Naive thymus-derived CD4-positive, alpha-beta T cell (primary cell): ENCODE measurements at regions of chr19 and their contacts with region 1.

Region 1: DNA sequence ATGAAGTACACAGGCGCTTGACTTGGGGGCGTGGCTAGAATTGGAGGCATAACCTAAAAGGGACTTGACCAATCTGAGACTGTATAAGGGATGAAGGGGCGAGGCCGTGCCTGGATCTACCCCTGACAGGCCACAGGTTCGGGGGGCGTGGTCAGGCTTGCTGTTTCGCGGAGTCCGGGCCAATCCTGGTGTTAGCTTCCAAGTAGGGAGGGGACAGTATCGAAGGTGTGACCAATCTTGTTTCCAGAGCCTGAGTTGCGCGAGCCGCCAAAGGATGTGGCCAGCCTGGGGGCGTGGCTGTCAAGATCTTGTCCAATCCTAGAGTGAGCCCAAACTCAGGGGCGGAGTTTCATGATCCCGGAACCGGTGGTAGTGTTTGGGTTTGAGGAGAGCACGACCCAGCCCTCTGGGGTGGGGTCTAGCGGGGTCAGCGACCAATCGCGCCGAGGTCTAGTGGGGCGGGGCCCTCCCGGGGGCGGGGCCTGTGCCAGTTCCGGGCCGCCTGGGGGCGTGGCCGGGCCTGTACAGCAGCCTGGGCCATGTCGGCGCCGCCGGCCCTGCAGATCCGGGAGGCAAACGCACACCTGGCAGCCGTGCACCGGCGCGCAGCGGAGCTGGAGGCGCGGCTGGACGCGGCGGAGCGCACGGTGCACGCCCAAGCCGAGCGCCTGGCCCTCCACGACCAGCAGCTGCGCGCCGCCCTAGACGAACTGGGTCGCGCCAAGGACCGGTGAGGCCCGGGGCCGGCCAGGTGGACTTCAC is at the start of gene VMAC:
- DNase-seq: peak in 8 of 9 donors; percentile 99 to 100 (median 100)
- ATAC-seq: peak; percentile 85
- H3K4me3 ChIP-seq: peak within 1 kb of the TSS; percentile 89
- H3K4me3 Mint-ChIP-seq: peak within 1 kb of the TSS; percentile 89 to 99 (median 96)
- H3K27ac ChIP-seq: peak within 1 kb of the TSS; percentile 93
- H3K27ac Mint-ChIP-seq: peak within 1 kb of the TSS; percentile 96 to 100 (median 100)
- H3K4me1 ChIP-seq: peaks cover 18 to 19% of the 10 kb centered on the region in 2 donors
- H3K4me1 Mint-ChIP-seq: peaks cover 21 to 53% (median 30%) of the 10 kb centered on the region in 7 donors
- H3K27me3 ChIP-seq: no peaks in the 10 kb centered on the region
- H3K27me3 Mint-ChIP-seq: no peaks in the 10 kb centered on the region
- total RNA-seq, gene VMAC: 13.1 to 39.4 (median 27.8) TPM

Region 2: GRCh38 chr19:4723367-4724187 is 1181.0 kb before region 1 on chr19 and contains the start of gene DPP9:
- CTCF ChIA-PET with region 1: no interaction called
- POLR2A ChIA-PET with region 1: no interaction called
- intact Hi-C with region 1: loop called in 1 of 2 experiments (anchors 1 kb)
- DNase-seq: peak; percentile 84 to 100 (median 99)
- ATAC-seq: peak; percentile 99
- H3K4me3 ChIP-seq: peak within 1 kb of the TSS; percentile 96
- H3K4me3 Mint-ChIP-seq: peak within 1 kb of the TSS; percentile 83 to 99 (median 95)
- H3K27ac ChIP-seq: peak within 1 kb of the TSS; percentile 87
- H3K27ac Mint-ChIP-seq: peak within 1 kb of the TSS; percentile 93 to 100 (median 98)
- H3K4me1 ChIP-seq: peaks cover 19 to 26% of the 10 kb centered on the region in 2 donors
- H3K4me1 Mint-ChIP-seq: peaks cover 21 to 48% (median 37%) of the 10 kb centered on the region in 7 donors
- H3K27me3 ChIP-seq: no peaks in the 10 kb centered on the region
- H3K27me3 Mint-ChIP-seq: peaks cover 0 to 10% (median 5%) of the 10 kb centered on the region in 5 donors
- total RNA-seq, gene DPP9: 71.2 to 90.7 (median 81.4) TPM

Region 3: DNA sequence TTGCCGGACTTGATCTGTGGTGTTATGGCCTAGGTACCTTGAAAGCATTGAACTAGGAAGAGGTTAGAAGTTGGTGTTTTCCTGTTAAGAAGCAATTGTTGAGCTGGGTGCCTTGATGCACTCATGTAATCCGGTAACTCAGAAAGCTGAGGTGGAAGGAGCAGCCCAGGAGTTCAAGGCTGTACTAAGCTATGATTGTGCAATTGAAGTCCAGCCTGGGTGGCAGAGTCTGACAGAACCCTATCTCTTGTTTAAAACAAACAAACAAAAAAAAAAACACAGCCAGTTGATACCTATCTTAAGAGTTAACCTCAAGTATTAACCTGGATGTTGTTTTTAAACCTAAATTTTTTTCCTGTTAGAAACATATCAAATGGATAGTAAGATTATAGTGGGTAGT is 262.3 kb before region 1 on chr19:
- CTCF ChIA-PET with region 1: no interaction called
- POLR2A ChIA-PET with region 1: no interaction called
- intact Hi-C with region 1: no loop called
- DNase-seq: no peak
- ATAC-seq: no peak
- H3K4me3 ChIP-seq: no peak overlapping the region
- H3K4me3 Mint-ChIP-seq: no peak overlapping the region
- H3K27ac ChIP-seq: no peak overlapping the region
- H3K27ac Mint-ChIP-seq: peak overlapping the region in 2 of 9 donors; percentile 38 to 60
- H3K4me1 ChIP-seq: no peaks in the 10 kb centered on the region
- H3K4me1 Mint-ChIP-seq: peaks cover 16 to 57% (median 47%) of the 10 kb centered on the region in 7 donors
- H3K27me3 ChIP-seq: no peaks in the 10 kb centered on the region
- H3K27me3 Mint-ChIP-seq: no peaks in the 10 kb centered on the region

Region 4: GRCh38 chr19:5690125-5690954 is 214.2 kb before region 1 on chr19 and contains the start of gene RPL36:
- CTCF ChIA-PET with region 1: no interaction called
- POLR2A ChIA-PET with region 1: interaction called, 4 read pairs
- intact Hi-C with region 1: loop called in 1 of 2 experiments (anchors 1 kb)
- DNase-seq: peak; percentile 95 to 100 (median 99)
- ATAC-seq: peak; percentile 77
- H3K4me3 ChIP-seq: peak within 1 kb of the TSS; percentile 90
- H3K4me3 Mint-ChIP-seq: peak within 1 kb of the TSS; percentile 90 to 98 (median 94)
- H3K27ac ChIP-seq: peak within 1 kb of the TSS; percentile 85
- H3K27ac Mint-ChIP-seq: peak within 1 kb of the TSS; percentile 89 to 97 (median 93)
- H3K4me1 ChIP-seq: peaks cover 12 to 21% of the 10 kb centered on the region in 2 donors
- H3K4me1 Mint-ChIP-seq: peaks cover 5 to 39% (median 33%) of the 10 kb centered on the region in 7 donors
- H3K27me3 ChIP-seq: no peaks in the 10 kb centered on the region
- H3K27me3 Mint-ChIP-seq: no peaks in the 10 kb centered on the region
- total RNA-seq, gene RPL36: 865 to 1,786 (median 1,037) TPM

Region 5: DNA sequence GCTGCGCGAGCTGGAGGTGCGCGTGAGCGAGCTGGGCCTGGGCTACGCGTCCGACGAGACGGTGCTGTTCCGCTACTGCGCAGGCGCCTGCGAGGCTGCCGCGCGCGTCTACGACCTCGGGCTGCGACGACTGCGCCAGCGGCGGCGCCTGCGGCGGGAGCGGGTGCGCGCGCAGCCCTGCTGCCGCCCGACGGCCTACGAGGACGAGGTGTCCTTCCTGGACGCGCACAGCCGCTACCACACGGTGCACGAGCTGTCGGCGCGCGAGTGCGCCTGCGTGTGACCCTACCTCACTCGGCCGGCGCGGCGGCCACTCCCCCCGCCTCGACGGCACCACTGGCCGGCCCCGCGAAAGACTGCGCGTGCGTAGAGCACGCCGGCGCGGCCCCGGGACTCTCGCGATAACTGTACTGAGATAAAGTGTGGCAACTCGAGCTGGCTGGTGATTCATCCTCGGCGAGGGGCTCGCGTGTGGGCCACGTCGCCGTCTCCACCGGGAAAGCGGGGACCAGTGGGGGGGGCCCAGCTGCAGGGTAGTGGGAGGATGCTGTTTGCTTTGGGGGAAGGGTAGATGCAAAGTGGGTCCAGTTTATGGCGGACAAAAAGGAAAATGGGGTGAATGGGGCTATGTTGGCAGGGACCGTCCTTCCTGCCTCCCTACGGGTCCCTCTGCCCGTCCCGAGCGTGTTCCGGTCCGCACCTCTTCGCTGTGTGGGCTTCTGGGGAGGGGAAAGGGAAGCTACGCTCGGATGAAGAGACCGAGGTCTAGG is 76.5 kb before region 1 on chr19:
- CTCF ChIA-PET with region 1: interaction called, 3 read pairs
- POLR2A ChIA-PET with region 1: interaction called, 43 read pairs
- intact Hi-C with region 1: loop called (anchors 1 kb)
- DNase-seq: peak; percentile 91 to 98 (median 94)
- ATAC-seq: peak; percentile 90
- H3K4me3 ChIP-seq: peak overlapping the region; percentile 76
- H3K4me3 Mint-ChIP-seq: peak overlapping the region; percentile 91 to 100 (median 97)
- H3K27ac ChIP-seq: peak overlapping the region; percentile 80
- H3K27ac Mint-ChIP-seq: peak overlapping the region; percentile 94 to 100 (median 97)
- H3K4me1 ChIP-seq: peaks cover 10 to 17% of the 10 kb centered on the region in 2 donors
- H3K4me1 Mint-ChIP-seq: peaks cover 5 to 19% (median 10%) of the 10 kb centered on the region in 7 donors
- H3K27me3 ChIP-seq: no peaks in the 10 kb centered on the region
- H3K27me3 Mint-ChIP-seq: peaks cover 0 to 6% (median 0%) of the 10 kb centered on the region in 5 donors

Region 6: GRCh38 chr19:5839065-5840017 is 65.2 kb before region 1 on chr19 and contains the start of gene FUT6:
- CTCF ChIA-PET with region 1: no interaction called
- POLR2A ChIA-PET with region 1: no interaction called
- intact Hi-C with region 1: no loop called
- DNase-seq: no peak
- ATAC-seq: no peak
- H3K4me3 ChIP-seq: no peak within 1 kb of the TSS
- H3K4me3 Mint-ChIP-seq: peak within 1 kb of the TSS in 2 of 10 donors; percentile 23 to 30
- H3K27ac ChIP-seq: no peak within 1 kb of the TSS
- H3K27ac Mint-ChIP-seq: no peak within 1 kb of the TSS
- H3K4me1 ChIP-seq: no peaks in the 10 kb centered on the region
- H3K4me1 Mint-ChIP-seq: peaks cover 0 to 12% (median 0%) of the 10 kb centered on the region in 7 donors
- H3K27me3 ChIP-seq: no peaks in the 10 kb centered on the region
- H3K27me3 Mint-ChIP-seq: peaks cover 0 to 9% (median 3%) of the 10 kb centered on the region in 5 donors
- total RNA-seq, gene FUT6: not detected

Region 7: GRCh38 chr19:5967994-5968430 is 63.5 kb after region 1 on chr19:
- CTCF ChIA-PET with region 1: interaction called, 3 read pairs
- POLR2A ChIA-PET with region 1: interaction called, 48 read pairs
- intact Hi-C with region 1: no loop called
- DNase-seq: peak in 8 of 9 donors; percentile 37 to 63 (median 56)
- ATAC-seq: peak; percentile 82
- H3K4me3 ChIP-seq: no peak overlapping the region
- H3K4me3 Mint-ChIP-seq: peak overlapping the region; percentile 33 to 84 (median 64)
- H3K27ac ChIP-seq: peak overlapping the region; percentile 53
- H3K27ac Mint-ChIP-seq: peak overlapping the region; percentile 3 to 92 (median 84)
- H3K4me1 ChIP-seq: peaks cover 37 to 66% of the 10 kb centered on the region in 2 donors
- H3K4me1 Mint-ChIP-seq: peaks cover 56 to 97% (median 90%) of the 10 kb centered on the region in 7 donors
- H3K27me3 ChIP-seq: no peaks in the 10 kb centered on the region
- H3K27me3 Mint-ChIP-seq: no peaks in the 10 kb centered on the region

Region 8: DNA sequence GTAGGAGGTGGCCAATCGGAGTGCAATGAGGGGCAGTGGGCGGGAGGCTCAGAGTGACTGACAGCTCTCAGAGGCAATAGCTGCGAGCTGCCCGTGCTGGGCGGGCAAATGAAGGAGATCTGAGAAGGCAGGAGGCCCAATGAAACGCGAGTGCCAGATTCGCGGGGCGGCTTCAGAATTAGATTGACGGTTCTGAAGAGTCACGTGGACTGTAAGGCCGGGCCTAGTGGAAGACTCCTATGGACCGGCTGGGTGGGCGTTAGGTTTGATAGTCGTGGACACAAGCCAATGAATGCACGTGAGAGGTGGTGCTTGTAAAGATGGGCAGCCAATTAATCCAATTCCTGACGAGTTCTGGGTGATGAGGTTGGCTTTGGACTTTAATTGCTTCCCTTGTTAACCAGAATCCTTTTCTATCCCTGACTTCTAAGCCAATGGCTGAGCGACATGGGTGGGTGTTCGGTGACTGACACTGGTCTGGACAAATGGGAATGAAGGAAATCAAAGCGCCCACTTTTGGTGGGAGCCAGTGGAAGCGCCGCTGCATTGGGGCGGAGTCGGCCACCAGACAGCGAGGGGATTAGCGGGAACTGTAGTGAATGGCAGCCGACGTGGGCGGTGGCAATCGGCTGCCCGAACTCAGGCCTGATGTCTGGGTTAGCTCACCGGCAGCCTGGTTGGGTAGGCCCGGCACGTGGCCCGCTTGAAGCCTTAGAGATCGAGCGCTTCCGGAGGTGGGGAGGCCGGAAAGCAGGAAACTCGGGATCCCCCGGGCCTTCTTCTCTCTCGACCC is 520.6 kb after region 1 on chr19:
- CTCF ChIA-PET with region 1: no interaction called
- POLR2A ChIA-PET with region 1: no interaction called
- intact Hi-C with region 1: loop called in 1 of 2 experiments (anchors 2 kb)
- DNase-seq: peak; percentile 66 to 100 (median 99)
- ATAC-seq: peak; percentile 89
- H3K4me3 ChIP-seq: peak overlapping the region; percentile 39
- H3K4me3 Mint-ChIP-seq: peak overlapping the region; percentile 69 to 87 (median 78)
- H3K27ac ChIP-seq: peak overlapping the region; percentile 77
- H3K27ac Mint-ChIP-seq: peak overlapping the region; percentile 78 to 97 (median 94)
- H3K4me1 ChIP-seq: peaks cover 15 to 32% of the 10 kb centered on the region in 2 donors
- H3K4me1 Mint-ChIP-seq: peaks cover 18 to 48% (median 41%) of the 10 kb centered on the region in 7 donors
- H3K27me3 ChIP-seq: no peaks in the 10 kb centered on the region
- H3K27me3 Mint-ChIP-seq: no peaks in the 10 kb centered on the region